ENCODE measurements at regions of chr16 and their contacts with region 1.

Region 1: DNA sequence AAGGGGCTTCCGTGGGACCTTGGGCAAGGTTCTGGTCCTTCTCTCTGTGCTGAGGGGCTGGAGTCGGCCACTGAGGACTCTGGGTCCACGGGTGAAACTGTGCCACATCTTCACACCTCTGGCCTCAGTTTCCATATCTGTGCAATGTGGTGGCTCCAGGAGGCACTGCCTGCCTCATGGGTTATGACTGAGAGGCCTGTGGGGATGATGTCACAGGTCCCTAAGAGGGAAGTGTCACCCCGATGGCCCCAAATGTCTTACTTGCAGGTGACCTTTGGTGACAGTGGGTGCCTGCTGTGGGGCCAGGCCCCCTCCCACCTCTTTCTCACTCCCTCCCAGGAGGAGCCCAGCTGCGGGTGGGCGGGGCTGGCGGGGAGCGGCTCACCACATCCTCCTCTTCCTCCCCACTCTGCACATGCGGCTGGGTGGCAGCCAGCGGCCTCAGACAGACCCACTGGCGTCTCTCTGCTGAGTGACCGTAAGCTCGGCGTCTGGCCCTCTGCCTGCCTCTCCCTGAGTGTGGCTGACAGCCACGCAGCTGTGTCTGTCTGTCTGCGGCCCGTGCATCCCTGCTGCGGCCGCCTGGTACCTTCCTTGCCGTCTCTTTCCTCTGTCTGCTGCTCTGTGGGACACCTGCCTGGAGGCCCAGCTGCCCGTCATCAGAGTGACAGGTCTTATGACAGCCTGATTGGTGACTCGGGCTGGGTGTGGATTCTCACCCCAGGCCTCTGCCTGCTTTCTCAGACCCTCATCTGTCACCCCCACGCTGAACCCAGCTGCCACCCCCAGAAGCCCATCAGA is at the start of gene IL21R:
- DNase-seq: peak; percentile 87
- ATAC-seq: peak; percentile 69
- H3K4me3 Mint-ChIP-seq: peak within 1 kb of the TSS; percentile 91
- H3K27ac Mint-ChIP-seq: peak within 1 kb of the TSS; percentile 95
- H3K4me1 Mint-ChIP-seq: peaks cover 56% of the 10 kb centered on the region
- H3K27me3 Mint-ChIP-seq: no peaks in the 10 kb centered on the region
- total RNA-seq, gene IL21R: 27.2 to 27.5 TPM

Region 2: DNA sequence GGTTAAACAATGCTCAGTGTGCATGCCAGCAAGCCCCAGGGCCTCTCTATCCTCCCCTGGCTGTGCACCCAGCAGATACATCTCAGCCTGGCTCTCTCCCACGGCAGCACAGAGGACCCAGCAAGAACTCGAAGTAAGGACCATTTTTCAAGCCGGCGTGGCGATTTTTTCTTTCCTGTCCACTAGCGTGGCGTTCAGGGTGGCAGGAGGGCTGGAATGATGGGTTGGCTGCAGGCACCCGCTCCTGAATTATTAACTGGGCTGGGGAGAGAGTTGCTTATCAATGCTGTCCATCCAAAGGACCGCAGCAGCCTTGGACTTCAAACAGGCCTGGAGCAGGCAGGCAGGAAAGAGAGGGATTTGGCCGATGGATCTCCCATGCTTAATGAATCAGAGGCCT is 328.3 kb before region 1 on chr16:
- POLR2A ChIA-PET with region 1: no interaction called
- DNase-seq: no peak
- ATAC-seq: no peak
- H3K4me3 Mint-ChIP-seq: no peak overlapping the region
- H3K27ac Mint-ChIP-seq: no peak overlapping the region
- H3K4me1 Mint-ChIP-seq: peaks cover 2% of the 10 kb centered on the region
- H3K27me3 Mint-ChIP-seq: peaks cover 6% of the 10 kb centered on the region

Region 3: DNA sequence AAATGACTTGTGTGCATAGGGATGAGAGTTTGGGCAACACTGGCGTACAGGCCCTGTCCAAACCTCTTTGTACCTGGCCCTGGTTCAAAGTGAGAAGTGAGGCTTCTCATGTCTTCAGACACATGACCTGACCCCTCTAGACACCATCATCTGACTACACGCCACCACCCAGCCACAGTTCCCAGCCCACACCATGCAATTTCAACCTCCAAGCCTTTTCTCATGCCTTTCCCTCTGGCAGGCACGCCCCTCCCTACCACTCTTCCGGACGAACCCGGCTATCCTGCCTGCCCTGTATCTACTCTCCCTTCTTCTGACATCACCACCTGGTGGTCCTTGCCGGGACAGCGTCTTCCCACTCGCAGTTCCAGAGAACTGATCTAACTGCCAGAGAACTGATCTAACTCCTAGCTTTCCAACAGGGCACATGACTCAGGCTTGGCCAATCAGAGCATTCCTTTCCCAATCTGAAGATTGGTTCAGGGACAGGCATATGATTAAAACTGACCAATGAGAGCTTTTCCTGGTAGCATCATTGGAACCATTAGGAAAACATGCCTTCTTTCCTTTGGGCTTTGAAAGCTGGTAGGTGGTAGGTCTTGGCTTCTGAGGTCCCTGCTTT is 27.1 kb before region 1 on chr16:
- POLR2A ChIA-PET with region 1: interaction called, 21 read pairs
- DNase-seq: peak; percentile 58
- ATAC-seq: peak; percentile 33
- H3K4me3 Mint-ChIP-seq: no peak overlapping the region
- H3K27ac Mint-ChIP-seq: no peak overlapping the region
- H3K4me1 Mint-ChIP-seq: peaks cover 27% of the 10 kb centered on the region
- H3K27me3 Mint-ChIP-seq: no peaks in the 10 kb centered on the region

Region 4: GRCh38 chr16:27414758-27415431 is 12.9 kb after region 1 on chr16:
- POLR2A ChIA-PET with region 1: no interaction called
- DNase-seq: no peak
- ATAC-seq: no peak
- H3K4me3 Mint-ChIP-seq: no peak overlapping the region
- H3K27ac Mint-ChIP-seq: no peak overlapping the region
- H3K4me1 Mint-ChIP-seq: peaks cover 40% of the 10 kb centered on the region
- H3K27me3 Mint-ChIP-seq: no peaks in the 10 kb centered on the region

Region 5: DNA sequence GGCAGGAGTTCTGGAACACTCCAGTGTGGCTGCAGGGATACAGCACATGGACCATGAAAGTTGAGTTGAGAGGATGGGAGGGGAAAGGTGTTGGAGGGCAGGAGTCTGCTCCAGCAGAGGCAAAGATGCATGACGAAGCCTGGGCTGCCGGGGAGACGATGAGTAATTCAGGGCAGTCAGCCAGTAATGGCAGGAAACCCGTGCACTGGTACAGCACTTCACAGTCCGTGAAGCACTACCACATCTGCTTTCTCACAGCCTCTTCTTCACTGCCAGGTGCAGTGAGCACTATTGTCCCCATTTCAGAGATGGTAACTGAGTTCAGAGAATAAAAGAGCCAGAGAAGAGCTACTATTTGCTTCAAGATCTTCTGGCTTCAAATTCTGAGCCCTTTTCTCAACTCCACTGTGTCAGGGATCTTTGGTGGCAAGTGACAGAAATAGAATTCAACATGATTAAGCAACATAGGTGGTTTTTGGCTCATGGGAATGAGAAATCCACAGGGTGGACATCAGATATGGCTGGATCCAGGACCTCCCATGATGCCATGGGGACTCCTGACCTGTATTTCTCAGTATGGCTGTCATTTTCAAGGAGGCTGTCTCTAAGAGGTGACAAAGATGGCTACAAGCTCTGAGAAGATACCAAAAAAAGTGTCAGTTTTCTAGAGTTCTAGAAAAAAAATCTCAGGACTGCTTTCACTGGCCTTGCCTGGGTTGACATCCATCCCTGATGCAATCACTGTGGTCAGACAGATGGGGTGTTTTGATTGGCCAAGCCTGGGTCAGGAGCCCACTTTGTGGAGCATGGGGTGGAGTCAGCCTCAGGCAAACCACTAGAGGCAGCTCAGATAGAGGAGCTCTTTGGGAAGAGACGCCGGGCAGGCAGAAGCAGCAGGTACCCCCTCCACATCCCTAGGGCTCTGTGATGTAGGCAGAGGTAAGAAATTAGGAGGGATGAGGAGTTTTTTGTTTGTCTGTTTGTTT is 24.7 kb after region 1 on chr16:
- POLR2A ChIA-PET with region 1: interaction called, 23 read pairs
- DNase-seq: peak; percentile 66
- ATAC-seq: peak; percentile 97
- H3K4me3 Mint-ChIP-seq: peak overlapping the region; percentile 71
- H3K27ac Mint-ChIP-seq: peak overlapping the region; percentile 86
- H3K4me1 Mint-ChIP-seq: peaks cover 47% of the 10 kb centered on the region
- H3K27me3 Mint-ChIP-seq: no peaks in the 10 kb centered on the region

Region 6: GRCh38 chr16:27449434-27450195 is 47.6 kb after region 1 on chr16:
- POLR2A ChIA-PET with region 1: interaction called, 25 read pairs
- DNase-seq: peak; percentile 77
- ATAC-seq: peak; percentile 71
- H3K4me3 Mint-ChIP-seq: peak overlapping the region; percentile 64
- H3K27ac Mint-ChIP-seq: peak overlapping the region; percentile 85
- H3K4me1 Mint-ChIP-seq: peaks cover 52% of the 10 kb centered on the region
- H3K27me3 Mint-ChIP-seq: no peaks in the 10 kb centered on the region

Region 7: GRCh38 chr16:27549859-27550581 is 148.1 kb after region 1 on chr16 and contains the starts of genes GTF3C1 and KATNIP:
- POLR2A ChIA-PET with region 1: no interaction called
- DNase-seq: peak; percentile 100
- ATAC-seq: peak; percentile 95
- H3K4me3 Mint-ChIP-seq: peak within 1 kb of the TSS; percentile 92
- H3K27ac Mint-ChIP-seq: peak within 1 kb of the TSS; percentile 83
- H3K4me1 Mint-ChIP-seq: peaks cover 23% of the 10 kb centered on the region
- H3K27me3 Mint-ChIP-seq: no peaks in the 10 kb centered on the region
- total RNA-seq, gene GTF3C1: 55.3 to 56.1 TPM
- total RNA-seq, gene KATNIP: 17.0 to 18.0 TPM

Measured in activated naive CD8-positive, alpha-beta T cell treated with anti-CD3 and anti-CD28 coated beads, Interleukin-2, amount 10 ng/mL, durations not matched to agents 7 days and 5 days (primary cell).